ENCODE measurements at regions of chrX and their contacts with region 1.

Region 1: DNA sequence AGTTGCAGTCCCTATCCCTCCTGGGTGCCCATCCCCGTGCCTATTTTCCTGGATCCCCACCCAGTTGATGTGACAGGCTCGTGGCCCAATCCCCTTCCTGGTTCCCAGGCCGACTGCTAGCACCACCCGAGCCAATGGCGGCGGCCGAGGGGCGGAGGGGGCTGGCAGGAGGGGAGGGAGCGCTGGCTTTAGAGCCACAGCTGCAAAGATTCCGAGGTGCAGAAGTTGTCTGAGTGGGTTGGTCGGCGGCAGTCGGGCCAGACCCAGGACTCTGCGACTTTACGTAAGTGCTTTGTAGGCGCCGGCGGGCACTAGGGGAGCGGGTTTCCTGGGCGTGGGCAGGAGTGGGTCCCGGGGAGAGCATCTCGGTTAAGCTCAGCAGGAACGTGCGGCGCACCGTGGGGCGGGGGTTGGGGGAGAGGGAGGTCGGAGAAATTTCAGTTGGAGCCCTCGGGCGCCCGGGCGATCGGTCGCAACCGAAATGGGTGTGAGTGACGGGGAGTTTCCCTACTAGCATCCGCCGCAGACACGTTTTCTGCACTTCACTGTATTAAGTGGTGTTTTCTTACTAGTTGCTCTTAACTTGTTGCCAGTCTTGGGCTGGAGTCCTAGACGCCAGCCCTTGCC is at the start of gene PLS3:
- DNase-seq: peak; percentile 71 to 97 (median 79)

Region 2: DNA sequence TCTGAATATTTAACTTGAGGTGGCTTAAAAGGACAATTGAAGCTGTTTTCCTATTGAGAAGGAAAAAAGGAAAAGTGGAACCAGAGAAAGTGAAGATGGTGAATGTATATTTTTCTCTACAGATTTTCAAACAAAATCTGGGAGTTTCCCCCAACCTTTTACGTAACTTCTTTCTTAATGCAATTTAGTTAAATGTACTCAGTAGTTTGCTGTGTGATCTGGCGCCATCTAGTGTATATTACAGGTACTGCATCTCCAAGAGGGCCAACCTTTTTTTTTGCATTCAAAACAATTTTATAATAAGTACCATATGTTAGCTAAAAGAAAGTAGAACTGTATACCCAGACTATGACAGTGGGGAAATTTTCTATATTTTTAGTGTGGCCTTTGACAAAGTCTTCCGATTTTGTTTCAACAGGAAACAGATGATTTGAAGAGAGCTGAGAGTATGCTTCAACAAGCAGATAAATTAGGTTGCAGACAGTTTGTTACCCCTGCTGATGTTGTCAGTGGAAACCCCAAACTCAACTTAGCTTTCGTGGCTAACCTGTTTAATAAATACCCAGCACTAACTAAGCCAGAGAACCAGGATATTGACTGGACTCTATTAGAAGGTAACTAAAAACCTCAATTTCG is 81.9 kb after region 1 on chrX:
- intact Hi-C with region 1: loop called (anchors 5 kb)
- DNase-seq: peak in 3 of 10 donors; percentile 16 to 25 (median 18)